MCF 10A (cell line): ENCODE measurements at regions of chr11 and their contacts with region 1.

Region 1: DNA sequence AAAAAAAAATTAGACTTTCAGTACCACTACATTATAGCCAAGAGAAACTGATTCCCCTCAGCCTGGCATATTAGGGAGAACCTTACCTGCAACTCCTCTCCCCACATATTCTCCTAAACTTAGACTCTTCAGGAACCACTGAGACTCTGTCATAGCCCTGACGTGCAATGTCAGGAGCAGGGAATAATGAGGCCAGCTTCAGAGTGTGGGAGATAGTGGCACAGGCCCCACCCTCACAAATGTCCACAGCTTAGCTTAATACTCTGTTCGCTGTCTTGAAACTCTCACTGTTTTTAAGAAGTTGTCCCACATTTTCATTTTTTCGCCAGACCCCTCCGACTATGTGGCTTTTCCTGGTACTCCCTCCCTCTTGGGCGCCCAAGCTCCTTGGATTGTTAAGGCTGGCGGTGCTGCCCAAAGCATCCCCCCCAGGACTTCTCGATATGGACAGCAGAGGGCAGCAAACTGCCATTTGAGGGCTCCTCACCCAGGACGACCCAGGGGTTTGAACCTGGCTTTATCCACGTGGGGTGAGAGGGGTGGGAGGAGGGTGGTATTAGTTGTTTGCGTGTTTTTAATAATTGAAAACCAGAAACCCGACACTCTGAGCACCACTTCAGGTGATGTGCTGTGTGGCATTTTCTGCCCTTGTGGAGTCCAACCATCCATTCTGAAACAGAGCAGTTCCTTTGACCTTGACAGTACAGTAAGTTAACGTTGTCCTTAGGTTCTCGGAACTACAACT is 45.2 kb upstream of the RASSF10 start:
- DNase-seq: peak; percentile 80
- H3K4me3 Mint-ChIP-seq: no peak overlapping the region
- H3K27ac Mint-ChIP-seq: no peak overlapping the region
- H3K4me1 Mint-ChIP-seq: peaks cover 16% of the 10 kb centered on the region
- H3K27me3 Mint-ChIP-seq: no peaks in the 10 kb centered on the region
- CTCF ChIP-seq: peak; percentile 85

Region 2: GRCh38 chr11:12331239-12331874 is 632.6 kb before region 1 on chr11:
- CTCF ChIA-PET with region 1: interaction called, 21 read pairs
- POLR2A ChIA-PET with region 1: interaction called, 5 read pairs
- intact Hi-C with region 1: loop called (anchors 1 kb)
- DNase-seq: peak; percentile 90
- H3K4me3 Mint-ChIP-seq: no peak overlapping the region
- H3K27ac Mint-ChIP-seq: no peak overlapping the region
- H3K4me1 Mint-ChIP-seq: peaks cover 4% of the 10 kb centered on the region
- H3K27me3 Mint-ChIP-seq: no peaks in the 10 kb centered on the region
- CTCF ChIP-seq: peak; percentile 89

Region 3: GRCh38 chr11:12979928-12980689 is 16.1 kb after region 1 on chr11:
- CTCF ChIA-PET with region 1: interaction called, 56 read pairs
- POLR2A ChIA-PET with region 1: interaction called, 3 read pairs
- intact Hi-C with region 1: no loop called
- DNase-seq: no peak
- H3K4me3 Mint-ChIP-seq: no peak overlapping the region
- H3K27ac Mint-ChIP-seq: no peak overlapping the region
- H3K4me1 Mint-ChIP-seq: no peaks in the 10 kb centered on the region
- H3K27me3 Mint-ChIP-seq: no peaks in the 10 kb centered on the region
- CTCF ChIP-seq: no peak

Region 4: GRCh38 chr11:13160346-13160745 is 196.4 kb after region 1 on chr11:
- CTCF ChIA-PET with region 1: interaction called, 196 read pairs
- POLR2A ChIA-PET with region 1: interaction called, 4 read pairs
- intact Hi-C with region 1: no loop called
- DNase-seq: peak; percentile 76
- H3K4me3 Mint-ChIP-seq: no peak overlapping the region
- H3K27ac Mint-ChIP-seq: peak overlapping the region; percentile 63
- H3K4me1 Mint-ChIP-seq: peaks cover 12% of the 10 kb centered on the region
- H3K27me3 Mint-ChIP-seq: no peaks in the 10 kb centered on the region
- CTCF ChIP-seq: no peak

Region 5: DNA sequence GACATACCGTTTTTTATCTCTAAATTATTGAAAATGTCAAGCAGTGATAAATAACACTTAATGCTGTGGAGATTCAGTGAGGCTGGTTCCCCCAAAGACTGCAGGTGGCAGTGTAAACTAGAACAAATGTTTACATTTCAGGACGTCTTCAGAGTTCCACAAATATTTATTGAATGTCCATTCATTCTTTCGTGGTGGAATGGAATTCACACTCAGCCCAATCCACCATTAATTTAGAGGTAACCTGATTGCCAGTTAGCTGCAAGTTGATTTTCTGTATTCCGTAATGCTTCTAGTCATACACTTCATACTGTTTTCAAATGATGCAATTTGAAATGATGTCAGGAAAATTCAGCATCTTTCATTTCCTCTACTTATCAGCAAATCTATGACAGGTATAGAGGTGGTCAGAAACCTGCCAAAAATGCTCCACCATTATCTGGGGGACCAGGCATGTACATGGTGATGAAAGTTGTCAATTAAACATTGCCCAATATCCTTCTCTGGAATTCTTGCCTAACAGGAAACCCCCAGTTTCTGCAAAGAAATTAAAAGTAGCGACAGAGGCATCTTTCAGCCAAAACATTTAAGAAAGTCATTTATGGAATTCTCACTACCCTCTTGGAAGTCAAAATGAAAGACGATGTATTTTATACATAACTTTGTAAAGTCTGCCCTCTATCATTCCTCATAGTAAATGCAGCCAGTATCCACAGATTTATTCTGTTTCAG is 219.3 kb after region 1 on chr11:
- CTCF ChIA-PET with region 1: interaction called, 95 read pairs
- POLR2A ChIA-PET with region 1: interaction called, 6 read pairs
- intact Hi-C with region 1: loop called (anchors 1 kb)
- DNase-seq: peak; percentile 53
- H3K4me3 Mint-ChIP-seq: peak overlapping the region; percentile 50
- H3K27ac Mint-ChIP-seq: no peak overlapping the region
- H3K4me1 Mint-ChIP-seq: peaks cover 12% of the 10 kb centered on the region
- H3K27me3 Mint-ChIP-seq: no peaks in the 10 kb centered on the region
- CTCF ChIP-seq: peak; percentile 40

Region 6: GRCh38 chr11:13343931-13344717 is 380.2 kb after region 1 on chr11:
- CTCF ChIA-PET with region 1: interaction called, 18 read pairs
- POLR2A ChIA-PET with region 1: no interaction called
- intact Hi-C with region 1: loop called (anchors 5 kb)
- DNase-seq: peak; percentile 86
- H3K4me3 Mint-ChIP-seq: no peak overlapping the region
- H3K27ac Mint-ChIP-seq: no peak overlapping the region
- H3K4me1 Mint-ChIP-seq: peaks cover 30% of the 10 kb centered on the region
- H3K27me3 Mint-ChIP-seq: no peaks in the 10 kb centered on the region
- CTCF ChIP-seq: peak; percentile 70